ENCODE measurements at regions of chr7 and their contacts with region 1.

Region 1: DNA sequence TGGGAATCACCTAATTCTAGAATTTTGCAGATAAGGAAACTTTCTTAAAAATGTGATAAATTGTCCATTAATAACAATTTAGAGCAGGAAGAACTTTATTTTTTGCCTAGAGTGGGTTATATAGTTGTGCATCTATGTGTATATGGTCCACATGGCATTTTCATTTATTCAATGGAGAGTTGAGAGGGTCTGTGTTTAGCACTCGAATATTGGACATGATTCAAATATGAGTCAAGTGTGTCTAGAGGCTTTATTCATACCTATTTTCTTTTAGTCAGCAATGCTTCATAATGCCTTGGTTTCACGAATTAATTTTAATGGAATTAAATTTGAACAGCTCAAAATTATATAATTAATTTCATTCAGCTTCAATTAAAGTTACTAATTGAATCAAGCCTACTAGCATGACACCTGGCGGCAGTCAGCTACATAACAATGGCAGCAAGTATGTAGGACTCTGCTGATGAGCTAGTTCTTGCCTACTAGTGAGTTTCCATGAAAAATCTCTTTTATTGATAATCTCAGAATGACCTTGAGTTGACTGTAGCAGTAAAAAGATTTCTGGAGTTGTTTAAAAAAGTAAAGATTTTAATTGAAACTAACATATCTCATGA is 17.7 kb downstream of the MDFIC start:
- DNase-seq: no peak
- H3K4me3 ChIP-seq: no peak overlapping the region
- H3K27ac ChIP-seq: no peak overlapping the region
- H3K4me1 ChIP-seq: peaks cover 0 to 2% (median under 1%) of the 10 kb centered on the region in 4 experiments; a peak in 3 of 7 replicates
- H3K27me3 ChIP-seq: no peaks in the 10 kb centered on the region
- CTCF ChIP-seq: peak in 2 of 3 experiments; percentile 7 to 14; a peak in 2 of 4 replicates
- EP300 ChIP-seq: no peak
- POLR2A ChIP-seq: no peak
- RAD21 ChIP-seq: peak; percentile 23 to 31; a peak in 3 of 4 replicates

Region 2: GRCh38 chr7:114922016-114922651 is 17.5 kb before region 1 on chr7 and contains the start of gene MDFIC:
- CTCF ChIA-PET with region 1: interaction called, 11 read pairs
- POLR2A ChIA-PET with region 1: no interaction called
- DNase-seq: peak in 1 of 2 experiments; percentile 78
- H3K4me3 ChIP-seq: peak within 1 kb of the TSS; percentile 67 to 82 (median 74)
- H3K27ac ChIP-seq: no peak within 1 kb of the TSS; the same call in 1 of the 2 replicates
- H3K4me1 ChIP-seq: peaks cover 0 to 15% (median 4%) of the 10 kb centered on the region in 4 experiments; a peak in 5 of 7 replicates
- H3K27me3 ChIP-seq: peaks cover 0 to 2% (median 0%) of the 10 kb centered on the region in 4 experiments; a peak in 1 of 7 replicates
- CTCF ChIP-seq: no peak
- EP300 ChIP-seq: no peak
- POLR2A ChIP-seq: peak in 1 of 2 experiments; percentile 40; a peak in 1 of 3 replicates
- RAD21 ChIP-seq: no peak; a peak in 1 of 4 replicates
- total RNA-seq, gene MDFIC: 11.4 TPM in 2 replicates

Region 3: DNA sequence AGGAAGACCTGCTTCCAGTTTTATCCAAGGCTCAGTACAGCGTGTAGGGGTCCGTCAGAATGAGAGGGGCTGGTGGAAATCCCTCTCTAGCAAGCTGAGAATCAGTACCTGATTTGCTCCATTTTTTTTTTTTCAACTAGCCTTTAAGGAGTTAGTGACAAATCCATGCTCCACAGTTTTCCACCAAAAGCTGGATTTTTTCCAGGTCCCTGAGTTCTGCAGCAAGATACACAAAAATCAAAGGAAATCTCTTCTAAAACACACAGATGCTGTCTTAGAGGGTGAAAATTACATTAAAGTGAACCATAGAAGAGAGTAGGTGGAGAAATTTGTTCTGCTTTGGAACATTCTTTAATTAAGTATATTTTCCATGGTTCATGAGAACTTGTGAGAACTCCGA is 12.7 kb after region 1 on chr7:
- CTCF ChIA-PET with region 1: interaction called, 12 read pairs
- POLR2A ChIA-PET with region 1: no interaction called
- DNase-seq: no peak
- H3K4me3 ChIP-seq: no peak overlapping the region
- H3K27ac ChIP-seq: no peak overlapping the region
- H3K4me1 ChIP-seq: no peaks in the 10 kb centered on the region
- H3K27me3 ChIP-seq: no peaks in the 10 kb centered on the region
- CTCF ChIP-seq: no peak
- EP300 ChIP-seq: no peak
- POLR2A ChIP-seq: no peak
- RAD21 ChIP-seq: no peak